ENCODE measurements at regions of chr17 and their contacts with region 1.

Region 1: GRCh38 chr17:28252436-28252835 is 66.6 kb upstream of the TMEM97 start:
- DNase-seq: no peak

Region 2: DNA sequence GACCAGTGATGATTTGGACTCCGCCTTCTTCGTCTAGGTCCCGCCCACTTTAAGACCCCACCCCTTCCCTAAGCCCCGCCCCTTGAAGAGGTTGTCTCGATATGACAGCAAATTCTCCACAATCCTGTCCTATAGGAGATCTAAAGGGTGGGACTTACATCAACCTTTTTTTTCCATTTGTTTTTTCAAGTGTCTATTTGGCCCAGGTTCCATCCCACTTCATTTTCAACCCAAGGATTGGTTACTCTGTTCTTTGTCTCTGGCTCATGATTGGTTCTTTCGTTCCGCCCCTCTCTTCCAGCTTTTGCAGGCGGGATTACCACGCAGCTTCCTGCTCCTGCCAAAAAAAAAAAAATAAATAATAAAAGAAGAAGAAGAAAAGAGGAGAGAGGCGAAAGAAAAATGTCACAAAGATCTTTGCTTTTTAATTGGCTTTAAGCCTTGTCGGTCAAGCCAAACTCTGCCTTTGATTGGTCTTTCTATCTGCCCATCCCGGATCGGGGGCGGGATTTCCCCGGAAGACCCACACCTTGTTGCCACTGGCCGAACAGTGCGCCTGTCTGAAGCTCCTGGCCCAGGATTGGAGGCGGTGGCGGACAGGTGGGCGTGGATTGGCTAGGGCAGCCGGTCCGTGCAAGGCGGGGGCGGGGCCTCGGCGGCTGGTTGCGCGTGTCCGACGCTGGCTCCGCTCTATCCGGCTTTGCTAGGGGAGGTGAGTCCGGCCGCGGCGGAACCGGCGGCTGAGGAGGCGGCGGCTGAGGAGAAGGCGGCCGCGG is 211.2 kb before region 1 on chr17:
- intact Hi-C with region 1: no loop called
- DNase-seq: peak; percentile 100

Region 3: GRCh38 chr17:28282596-28282995 is 30.2 kb after region 1 on chr17:
- intact Hi-C with region 1: loop called in 1 of 2 experiments (anchors 5 kb)
- DNase-seq: no peak

Region 4: GRCh38 chr17:28433721-28434120 is 181.3 kb after region 1 on chr17:
- intact Hi-C with region 1: loop called in 1 of 2 experiments (anchors 5 kb)
- DNase-seq: no peak